Psoas muscle (tissue), 8 donors: ENCODE measurements at regions of chr2 and their contacts with region 1.

Region 1: GRCh38 chr2:65554765-65555591 is 122.6 kb upstream of the SPRED2 start:
- DNase-seq: no peak
- ATAC-seq: peak in 2 of 4 donors; percentile 33 to 43
- H3K4me3 ChIP-seq: no peak overlapping the region
- H3K27ac ChIP-seq: no peak overlapping the region
- H3K4me1 ChIP-seq: no peaks in the 10 kb centered on the region
- H3K27me3 ChIP-seq: no peaks in the 10 kb centered on the region
- CTCF ChIP-seq: no peak

Region 2: DNA sequence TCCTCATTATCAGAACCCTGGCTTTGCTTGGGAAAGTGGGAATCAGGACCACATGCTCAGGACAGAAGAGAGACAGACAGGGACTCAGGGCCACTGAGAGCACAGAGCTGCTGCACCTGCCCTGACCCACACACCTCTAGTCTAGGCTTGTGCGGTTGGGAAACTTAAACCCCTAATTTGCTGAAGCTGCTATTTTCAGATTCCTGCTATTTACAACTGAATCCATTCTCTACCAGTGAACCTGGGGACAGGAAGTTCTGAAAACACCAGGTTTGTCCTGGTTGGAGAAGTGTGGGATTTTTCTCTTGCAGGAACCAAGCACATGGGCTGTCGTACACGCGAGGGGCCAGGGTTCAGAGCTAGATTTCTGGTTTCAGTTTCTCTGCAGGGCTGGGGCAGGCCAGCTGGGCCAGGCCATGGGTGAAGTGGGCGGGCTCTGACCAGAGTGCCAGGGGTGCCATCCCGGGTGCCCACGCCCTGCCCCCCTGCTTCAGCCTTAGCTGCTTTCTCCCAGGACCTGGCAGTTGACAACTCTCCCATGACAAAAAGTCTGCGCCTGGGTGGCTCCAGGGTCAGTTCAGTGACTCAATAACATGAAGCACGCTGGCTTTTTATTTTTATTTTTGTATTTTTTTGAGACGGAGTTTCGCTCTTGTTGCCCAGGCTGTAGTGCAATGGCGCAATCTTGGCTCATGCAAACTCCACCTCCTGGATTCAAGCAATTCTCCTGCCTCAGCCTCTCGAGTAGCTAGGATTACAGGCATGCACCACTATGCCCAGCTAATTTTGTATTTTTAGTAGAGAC is 617.1 kb before region 1 on chr2:
- intact Hi-C with region 1: no loop called
- DNase-seq: peak; percentile 32 to 72
- ATAC-seq: peak; percentile 65 to 83 (median 79)
- H3K4me3 ChIP-seq: peak overlapping the region; percentile 63
- H3K27ac ChIP-seq: peak overlapping the region; percentile 93
- H3K4me1 ChIP-seq: peaks cover 29% of the 10 kb centered on the region
- H3K27me3 ChIP-seq: no peaks in the 10 kb centered on the region
- CTCF ChIP-seq: no peak

Region 3: DNA sequence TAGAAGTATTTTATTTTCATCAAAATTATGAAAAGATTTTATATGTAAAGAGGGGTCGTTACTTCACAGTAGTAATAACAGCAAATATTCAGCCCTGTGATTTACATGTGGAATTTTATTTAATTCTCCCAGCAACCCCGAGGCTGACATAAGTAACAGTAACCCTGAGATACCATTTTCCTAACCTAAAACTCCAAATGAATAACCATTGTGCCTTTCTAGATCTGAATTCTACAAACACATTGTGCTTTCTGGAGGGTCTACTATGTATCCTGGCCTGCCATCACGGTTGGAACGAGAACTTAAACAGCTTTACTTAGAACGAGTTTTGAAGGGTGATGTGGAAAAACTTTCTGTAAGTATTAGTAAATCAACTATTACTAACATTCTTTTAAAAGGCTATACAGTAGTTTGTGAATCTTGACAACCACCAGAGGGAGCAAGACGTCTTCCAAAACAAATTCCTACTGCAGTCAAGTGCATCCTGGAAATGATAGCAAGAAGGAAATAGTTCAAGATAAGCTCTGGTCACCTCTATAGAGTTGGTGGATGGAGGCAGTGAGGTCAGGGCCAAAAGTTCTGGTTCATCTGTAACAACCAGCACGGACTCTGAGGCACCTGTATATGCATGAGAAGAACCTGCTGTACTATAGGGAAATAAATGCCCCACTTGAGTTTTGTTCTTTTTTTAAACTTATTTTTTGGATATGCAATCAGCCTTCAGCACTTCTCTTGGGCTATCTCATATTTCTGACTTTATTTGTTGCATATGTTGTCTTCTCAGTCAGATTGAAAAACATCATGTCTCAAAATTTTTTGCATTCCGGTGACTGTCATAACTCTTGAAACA is 289.9 kb before region 1 on chr2:
- intact Hi-C with region 1: loop called (anchors 1 to 5 kb)
- DNase-seq: no peak
- ATAC-seq: peak; percentile 49 to 80 (median 70)
- H3K4me3 ChIP-seq: no peak overlapping the region
- H3K27ac ChIP-seq: no peak overlapping the region
- H3K4me1 ChIP-seq: peaks cover 4% of the 10 kb centered on the region
- H3K27me3 ChIP-seq: no peaks in the 10 kb centered on the region
- CTCF ChIP-seq: peak; percentile 73

Region 4: GRCh38 chr2:65437392-65438135 is 117.4 kb before region 1 on chr2:
- intact Hi-C with region 1: loop called (anchors 2 to 5 kb)
- DNase-seq: no peak
- ATAC-seq: no peak
- H3K4me3 ChIP-seq: peak overlapping the region; percentile 74
- H3K27ac ChIP-seq: peak overlapping the region; percentile 95
- H3K4me1 ChIP-seq: peaks cover 12% of the 10 kb centered on the region
- H3K27me3 ChIP-seq: no peaks in the 10 kb centered on the region
- CTCF ChIP-seq: no peak

Region 5: DNA sequence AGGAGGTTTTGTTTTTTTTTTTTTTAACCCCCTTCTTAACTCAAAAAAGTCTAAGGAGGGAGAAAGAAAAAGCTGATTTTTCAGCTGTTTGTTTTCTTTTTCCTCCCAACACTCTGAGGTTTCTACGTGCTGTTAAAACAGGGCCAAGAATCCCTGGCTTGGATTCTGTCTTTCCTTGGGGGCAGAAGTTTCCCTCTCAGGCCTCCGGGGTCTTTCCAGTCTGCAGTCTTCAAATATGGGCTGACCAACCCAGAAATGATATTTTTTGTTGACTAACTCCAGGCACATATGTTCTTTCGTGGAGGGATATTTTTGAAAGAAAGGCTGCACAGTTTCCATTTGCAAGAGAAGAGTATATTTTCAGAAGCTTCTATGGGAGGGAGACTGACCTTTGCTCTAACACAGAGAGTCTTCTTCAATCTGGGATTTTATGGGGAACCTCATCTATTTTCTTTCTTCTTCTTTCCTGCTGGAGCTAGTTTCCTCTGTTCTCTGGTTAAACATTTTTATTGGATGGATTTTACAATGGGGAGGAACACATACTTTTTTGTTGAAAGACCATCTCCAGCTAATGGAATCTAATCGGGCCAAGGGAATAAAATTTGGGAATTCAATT is 29.3 kb before region 1 on chr2:
- intact Hi-C with region 1: no loop called
- DNase-seq: no peak
- ATAC-seq: no peak
- H3K4me3 ChIP-seq: no peak overlapping the region
- H3K27ac ChIP-seq: no peak overlapping the region
- H3K4me1 ChIP-seq: no peaks in the 10 kb centered on the region
- H3K27me3 ChIP-seq: peaks cover 0 to 2% (median 0%) of the 10 kb centered on the region in 3 donors
- CTCF ChIP-seq: no peak

Region 6: DNA sequence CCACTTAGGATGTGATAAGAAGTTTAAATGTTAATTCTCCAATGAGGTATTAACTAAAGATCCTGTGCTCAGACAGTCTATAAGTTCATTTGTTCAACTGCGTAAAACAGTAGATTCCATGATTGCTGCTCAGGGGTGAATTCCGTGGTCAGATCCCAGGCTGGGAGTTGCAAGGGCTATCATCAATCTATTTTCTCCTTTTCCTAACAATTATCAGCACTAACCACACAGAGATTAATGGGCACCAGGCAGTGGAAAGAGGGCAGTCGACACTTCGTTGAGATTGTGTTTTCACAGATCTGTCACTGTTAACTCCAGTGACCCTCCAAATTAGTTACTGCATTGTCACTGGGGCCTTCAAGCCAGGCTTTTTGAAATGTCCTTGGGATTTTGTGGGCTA is 31.5 kb after region 1 on chr2:
- intact Hi-C with region 1: no loop called
- DNase-seq: no peak
- ATAC-seq: no peak
- H3K4me3 ChIP-seq: no peak overlapping the region
- H3K27ac ChIP-seq: no peak overlapping the region
- H3K4me1 ChIP-seq: no peaks in the 10 kb centered on the region
- H3K27me3 ChIP-seq: no peaks in the 10 kb centered on the region
- CTCF ChIP-seq: no peak